ENCODE measurements at regions of chr10 and their contacts with region 1.

Region 1: GRCh38 chr10:68720793-68721672 is at the start of gene CCAR1:
- DNase-seq: peak; percentile 98
- ATAC-seq: peak; percentile 100
- H3K4me3 Mint-ChIP-seq: peak within 1 kb of the TSS; percentile 91
- H3K27ac Mint-ChIP-seq: peak within 1 kb of the TSS; percentile 96
- H3K4me1 Mint-ChIP-seq: peaks cover 9% of the 10 kb centered on the region
- H3K27me3 Mint-ChIP-seq: no peaks in the 10 kb centered on the region
- total RNA-seq, gene CCAR1: 89.5 to 125 TPM

Region 2: DNA sequence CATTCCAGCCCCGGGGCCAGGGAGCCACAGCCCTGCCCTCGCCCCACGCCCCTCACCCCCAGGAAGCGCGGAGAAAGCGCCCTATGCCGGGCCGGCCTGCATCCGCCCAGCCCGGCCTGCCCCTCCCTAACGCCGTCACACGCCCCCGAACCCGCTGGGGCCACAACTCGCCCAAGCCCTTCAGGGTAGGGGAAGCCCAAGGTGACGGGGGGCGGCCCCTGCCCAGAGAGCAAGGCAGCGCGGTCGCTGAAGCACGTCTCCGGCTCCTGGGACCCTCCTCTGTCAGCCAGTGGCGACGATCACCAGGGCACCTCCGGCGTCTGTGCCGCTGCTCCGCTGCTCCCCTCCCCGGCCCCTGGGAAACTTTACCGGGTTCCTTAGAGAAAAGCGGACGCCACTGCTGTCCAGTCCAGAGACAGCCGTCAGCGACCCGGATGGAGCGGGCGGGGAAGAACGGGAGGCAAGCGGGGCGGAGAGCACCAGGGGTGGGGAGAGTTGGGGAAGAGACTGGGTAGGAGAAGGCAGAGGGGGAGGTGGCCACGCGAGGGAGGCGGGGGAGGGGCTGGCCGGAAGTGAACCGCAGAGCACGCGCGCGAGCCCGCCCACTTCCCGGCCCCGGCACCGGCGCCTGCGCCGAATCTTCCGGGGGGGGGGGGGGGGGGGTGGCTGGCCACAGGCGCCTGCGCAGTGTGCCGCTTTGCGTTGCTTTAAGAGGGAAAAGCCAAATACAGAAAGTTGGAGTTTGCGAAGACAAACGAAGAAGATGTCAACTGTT is 646.1 kb before region 1 on chr10 and contains the start of gene HERC4:
- CTCF ChIA-PET with region 1: no interaction called
- POLR2A ChIA-PET with region 1: no interaction called
- intact Hi-C with region 1: loop called in 1 of 2 experiments (anchors 10 kb)
- DNase-seq: peak; percentile 94
- ATAC-seq: peak; percentile 83
- H3K4me3 Mint-ChIP-seq: peak within 1 kb of the TSS; percentile 98
- H3K27ac Mint-ChIP-seq: peak within 1 kb of the TSS; percentile 93
- H3K4me1 Mint-ChIP-seq: peaks cover 31% of the 10 kb centered on the region
- H3K27me3 Mint-ChIP-seq: no peaks in the 10 kb centered on the region
- total RNA-seq, gene HERC4: 39.5 to 50.8 TPM

Region 3: DNA sequence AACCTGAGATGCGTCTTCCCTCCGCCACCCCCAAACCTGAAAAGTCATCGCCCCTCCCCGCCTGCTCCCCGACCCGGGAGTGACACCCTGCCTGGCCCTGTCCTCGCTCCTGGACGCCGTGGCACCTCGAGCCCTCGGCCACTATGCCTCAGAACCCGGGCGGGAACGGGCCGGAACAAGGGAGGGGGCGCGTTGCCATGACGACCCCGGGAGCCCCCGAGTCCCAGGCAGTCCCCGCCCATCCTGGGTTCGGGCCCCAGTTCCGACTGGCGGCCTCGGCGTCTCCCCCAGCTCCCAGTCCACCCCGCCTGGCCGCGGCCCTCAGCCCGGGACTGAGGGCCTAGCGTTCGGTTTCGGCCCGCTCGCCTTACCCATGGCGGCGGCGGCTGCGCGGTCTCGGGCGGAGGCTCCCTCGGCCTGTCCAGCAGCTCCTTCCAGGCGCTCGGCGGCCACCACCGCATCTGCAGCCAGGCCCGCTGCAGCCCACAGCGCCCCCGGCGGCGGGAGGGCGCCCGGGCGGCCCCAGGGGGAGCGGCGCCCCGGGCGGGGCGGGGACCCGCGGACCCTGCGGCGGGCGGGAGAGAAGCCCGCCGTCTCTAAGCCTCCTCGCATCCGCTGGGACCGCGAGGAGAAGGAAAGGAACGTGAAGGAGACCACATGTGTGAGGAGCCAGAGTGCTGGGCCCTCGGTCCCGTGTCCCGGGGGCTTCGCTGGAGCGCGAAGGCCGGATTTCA is 314.1 kb before region 1 on chr10 and contains the start of gene RUFY2:
- CTCF ChIA-PET with region 1: no interaction called
- POLR2A ChIA-PET with region 1: interaction called, 3 read pairs
- intact Hi-C with region 1: loop called in 1 of 2 experiments (anchors 1 kb)
- DNase-seq: peak; percentile 86
- ATAC-seq: peak; percentile 95
- H3K4me3 Mint-ChIP-seq: peak within 1 kb of the TSS; percentile 83
- H3K27ac Mint-ChIP-seq: peak within 1 kb of the TSS; percentile 76
- H3K4me1 Mint-ChIP-seq: peaks cover 19% of the 10 kb centered on the region
- H3K27me3 Mint-ChIP-seq: no peaks in the 10 kb centered on the region
- total RNA-seq, gene RUFY2: 9.1 to 9.5 TPM

Region 4: DNA sequence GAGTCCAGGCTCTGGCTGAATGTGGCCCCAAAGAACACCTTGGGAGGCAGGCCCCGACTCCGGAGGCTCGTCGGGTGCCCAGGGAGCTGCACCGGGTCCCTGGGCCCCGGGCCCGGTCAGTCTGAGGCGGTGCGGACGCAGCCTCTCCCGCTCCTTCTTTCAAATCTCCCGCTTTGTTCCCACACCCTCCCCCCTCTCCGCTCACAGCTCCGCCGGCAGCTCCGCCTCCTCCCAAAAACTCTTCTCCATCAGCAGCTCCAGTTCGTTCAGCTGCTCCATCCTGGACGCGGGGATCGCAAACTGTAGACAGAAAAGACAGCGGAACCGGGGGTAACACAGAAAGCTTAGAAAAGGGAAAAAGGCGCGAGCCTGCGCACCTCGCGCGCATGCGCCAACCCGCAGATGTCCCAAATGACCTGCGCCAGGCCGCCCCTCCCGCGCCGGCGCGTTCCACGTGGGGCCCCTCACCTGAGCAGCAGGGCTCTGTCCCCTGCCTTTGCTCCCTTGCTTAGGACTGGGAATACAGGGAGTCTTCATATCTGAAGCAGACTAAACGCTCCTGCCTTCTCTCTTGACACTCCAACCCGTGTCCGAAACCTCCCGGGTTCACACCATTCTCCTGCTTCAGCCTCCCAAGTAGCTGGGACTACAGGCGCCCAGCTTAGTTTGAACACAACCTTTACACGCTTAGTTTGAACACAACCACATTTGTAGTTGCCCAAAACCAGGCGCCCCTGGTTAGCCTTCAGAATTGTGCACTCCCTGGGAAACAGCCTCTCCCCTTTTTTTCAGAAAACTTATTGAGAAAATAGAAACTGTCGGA is 249.2 kb before region 1 on chr10 and contains the start of gene DNA2:
- CTCF ChIA-PET with region 1: no interaction called
- POLR2A ChIA-PET with region 1: no interaction called
- intact Hi-C with region 1: loop called (anchors 1 to 5 kb)
- DNase-seq: peak; percentile 89
- ATAC-seq: peak; percentile 95
- H3K4me3 Mint-ChIP-seq: peak within 1 kb of the TSS; percentile 92
- H3K27ac Mint-ChIP-seq: peak within 1 kb of the TSS; percentile 91
- H3K4me1 Mint-ChIP-seq: peaks cover 22% of the 10 kb centered on the region
- H3K27me3 Mint-ChIP-seq: no peaks in the 10 kb centered on the region
- total RNA-seq, gene DNA2: 27.3 to 28.9 TPM

Region 5: GRCh38 chr10:68550747-68551411 is 170.2 kb before region 1 on chr10:
- CTCF ChIA-PET with region 1: interaction called, 4 read pairs
- POLR2A ChIA-PET with region 1: no interaction called
- intact Hi-C with region 1: loop called in 1 of 2 experiments (anchors 5 kb)
- DNase-seq: peak; percentile 58
- ATAC-seq: peak; percentile 80
- H3K4me3 Mint-ChIP-seq: no peak overlapping the region
- H3K27ac Mint-ChIP-seq: no peak overlapping the region
- H3K4me1 Mint-ChIP-seq: no peaks in the 10 kb centered on the region
- H3K27me3 Mint-ChIP-seq: no peaks in the 10 kb centered on the region

Region 6: GRCh38 chr10:68600041-68600778 is 120.8 kb before region 1 on chr10:
- CTCF ChIA-PET with region 1: no interaction called
- POLR2A ChIA-PET with region 1: no interaction called
- intact Hi-C with region 1: loop called in 1 of 2 experiments (anchors 2 kb)
- DNase-seq: peak; percentile 73
- ATAC-seq: peak; percentile 88
- H3K4me3 Mint-ChIP-seq: peak overlapping the region; percentile 80
- H3K27ac Mint-ChIP-seq: peak overlapping the region; percentile 95
- H3K4me1 Mint-ChIP-seq: peaks cover 26% of the 10 kb centered on the region
- H3K27me3 Mint-ChIP-seq: no peaks in the 10 kb centered on the region

Region 7: GRCh38 chr10:68955832-68956532 is 234.9 kb after region 1 on chr10 and contains the start of gene DDX21:
- CTCF ChIA-PET with region 1: interaction called, 3 read pairs
- POLR2A ChIA-PET with region 1: interaction called, 4 read pairs
- intact Hi-C with region 1: loop called in 1 of 2 experiments (anchors 1 kb)
- DNase-seq: peak; percentile 94
- ATAC-seq: peak; percentile 85
- H3K4me3 Mint-ChIP-seq: peak within 1 kb of the TSS; percentile 98
- H3K27ac Mint-ChIP-seq: peak within 1 kb of the TSS; percentile 100
- H3K4me1 Mint-ChIP-seq: peaks cover 35% of the 10 kb centered on the region
- H3K27me3 Mint-ChIP-seq: no peaks in the 10 kb centered on the region
- total RNA-seq, gene DDX21: 187 to 192 TPM